ENCODE measurements at regions of chr2 and their contacts with region 1.

Region 1: DNA sequence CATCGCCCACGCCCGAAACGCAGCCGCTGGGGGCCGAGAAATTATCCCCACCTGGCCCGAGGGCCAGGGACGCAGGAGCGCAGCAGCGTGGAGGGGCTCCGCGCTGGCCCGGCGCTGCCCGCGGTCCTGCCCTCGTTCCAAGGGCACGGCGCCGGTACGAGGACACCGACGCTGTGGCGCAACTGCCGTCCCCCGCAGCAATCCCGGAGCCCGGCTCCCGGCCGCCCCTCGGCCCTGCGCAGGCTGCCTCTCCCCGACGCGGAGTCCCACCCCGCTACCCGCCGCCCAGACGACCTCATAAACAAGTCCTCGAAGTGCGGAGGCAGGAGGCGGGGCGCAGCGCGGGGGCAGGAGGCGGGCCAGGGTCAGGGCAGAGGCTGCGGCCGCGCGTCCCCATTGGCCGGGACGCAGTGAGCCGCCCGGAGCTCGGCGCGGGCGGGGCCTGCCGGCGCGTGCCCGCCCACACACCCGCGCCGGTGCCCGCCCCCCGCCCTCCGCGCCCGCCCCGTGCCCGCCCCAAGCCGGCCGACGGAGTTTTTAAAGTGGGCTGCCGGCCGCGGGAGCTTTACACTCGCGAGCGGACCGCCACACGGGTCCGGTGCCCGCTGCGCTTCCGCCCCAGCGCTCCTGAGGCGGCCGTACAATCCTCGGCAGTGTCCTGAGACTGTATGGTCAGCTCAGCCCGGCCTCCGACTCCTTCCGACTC is at the start of gene EPAS1:
- DNase-seq: peak; percentile 96 to 97
- ATAC-seq: peak; percentile 85 to 92 (median 90)
- H3K4me3 ChIP-seq: peak within 1 kb of the TSS; percentile 83
- H3K27ac ChIP-seq: peak within 1 kb of the TSS; percentile 90
- H3K4me1 ChIP-seq: no peaks in the 10 kb centered on the region
- H3K27me3 ChIP-seq: no peaks in the 10 kb centered on the region
- CTCF ChIP-seq: no peak
- total RNA-seq, gene EPAS1: 44.3 to 123 (median 98.3) TPM

Region 2: DNA sequence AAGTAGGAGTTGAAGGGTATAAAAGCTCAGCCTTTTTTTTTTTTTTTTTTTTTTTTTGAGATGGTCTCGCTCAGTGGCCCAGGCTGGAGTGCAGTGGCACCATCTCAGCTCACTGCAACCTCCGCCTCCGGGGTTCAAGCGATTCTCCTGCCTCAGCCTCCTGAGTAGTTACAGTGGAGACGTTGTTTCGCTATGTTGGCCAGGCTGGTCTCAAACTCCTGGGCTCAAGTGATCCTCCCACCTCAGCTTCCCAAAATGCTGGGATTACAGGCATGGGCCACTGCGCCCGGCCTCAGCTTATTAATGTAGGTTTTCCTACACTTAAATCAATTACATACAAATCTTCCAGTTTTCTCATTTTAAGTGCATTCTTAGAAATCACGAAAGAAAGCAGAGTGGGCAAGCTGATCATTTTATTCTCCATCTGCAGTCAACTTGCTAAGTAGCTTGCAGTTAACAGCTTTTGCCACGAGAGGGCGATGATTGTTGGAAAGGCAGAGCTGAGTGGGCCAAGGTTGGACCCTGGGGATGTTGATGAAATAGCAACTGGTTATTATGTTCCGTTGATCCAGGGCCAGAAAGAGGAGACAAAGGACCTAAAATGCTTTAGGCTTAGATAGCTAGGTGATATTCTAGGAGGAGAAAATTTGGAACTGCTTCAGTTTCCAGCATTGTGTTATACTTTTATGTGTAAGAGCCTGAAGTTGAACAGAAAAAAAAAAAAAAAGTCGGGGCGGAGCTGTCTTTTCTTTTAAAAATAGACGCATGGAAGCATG is 234.2 kb before region 1 on chr2:
- intact Hi-C with region 1: loop called (anchors 5 to 10 kb)
- DNase-seq: peak; percentile 74 to 79
- ATAC-seq: peak; percentile 58 to 91 (median 76)
- H3K4me3 ChIP-seq: no peak overlapping the region
- H3K27ac ChIP-seq: no peak overlapping the region
- H3K4me1 ChIP-seq: no peaks in the 10 kb centered on the region
- H3K27me3 ChIP-seq: no peaks in the 10 kb centered on the region
- CTCF ChIP-seq: peak; percentile 88

Region 3: GRCh38 chr2:46097714-46098480 is 199.1 kb before region 1 on chr2:
- intact Hi-C with region 1: no loop called
- DNase-seq: no peak
- ATAC-seq: peak; percentile 54 to 75 (median 64)
- H3K4me3 ChIP-seq: no peak overlapping the region
- H3K27ac ChIP-seq: peak overlapping the region; percentile 39
- H3K4me1 ChIP-seq: peaks cover 8% of the 10 kb centered on the region
- H3K27me3 ChIP-seq: no peaks in the 10 kb centered on the region
- CTCF ChIP-seq: no peak

Region 4: GRCh38 chr2:46335391-46336282 is 38.6 kb after region 1 on chr2:
- intact Hi-C with region 1: loop called (anchors 5 kb)
- DNase-seq: peak in 1 of 2 donors; percentile 34
- ATAC-seq: peak; percentile 22 to 42 (median 36)
- H3K4me3 ChIP-seq: peak overlapping the region; percentile 54
- H3K27ac ChIP-seq: peak overlapping the region; percentile 79
- H3K4me1 ChIP-seq: peaks cover 95% of the 10 kb centered on the region
- H3K27me3 ChIP-seq: no peaks in the 10 kb centered on the region
- CTCF ChIP-seq: no peak